A673 (cell line): ENCODE measurements at regions of chr16 and their contacts with region 1.

Region 1: GRCh38 chr16:19886073-19886941 is 1.7 kb upstream of the GPRC5B start:
- DNase-seq: peak; percentile 89
- H3K4me3 ChIP-seq: peak overlapping the region; percentile 48
- H3K27ac ChIP-seq: no peak overlapping the region
- H3K4me1 ChIP-seq: peaks cover 23% of the 10 kb centered on the region
- H3K27me3 ChIP-seq: peaks cover 11% of the 10 kb centered on the region
- CTCF ChIP-seq: peak; percentile 99

Region 2: DNA sequence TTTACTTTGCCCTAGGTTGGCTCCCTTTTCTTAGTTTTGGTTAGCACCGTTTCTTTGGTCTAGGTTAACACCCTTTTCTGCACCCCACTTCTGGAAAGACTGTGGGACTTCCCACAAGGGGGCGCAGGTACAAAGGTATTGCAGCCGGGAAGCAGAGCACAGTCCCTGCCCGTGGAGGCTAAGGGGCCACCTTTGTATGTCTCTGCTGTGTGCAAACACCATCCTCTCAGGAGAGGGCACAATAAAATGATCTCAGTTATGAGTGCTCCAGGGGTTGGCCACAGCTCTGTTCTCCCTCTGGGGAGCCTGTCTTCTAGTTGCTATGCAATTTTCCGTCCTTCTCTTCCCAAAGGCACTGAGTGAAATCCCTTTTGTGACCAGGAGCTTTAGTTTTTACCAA is 497.1 kb before region 1 on chr16:
- CTCF ChIA-PET with region 1: no interaction called
- POLR2A ChIA-PET with region 1: no interaction called
- intact Hi-C with region 1: loop called (anchors 10 kb)
- DNase-seq: peak; percentile 53
- H3K4me3 ChIP-seq: no peak overlapping the region
- H3K27ac ChIP-seq: no peak overlapping the region
- H3K4me1 ChIP-seq: peaks cover 12% of the 10 kb centered on the region
- H3K27me3 ChIP-seq: no peaks in the 10 kb centered on the region
- CTCF ChIP-seq: peak; percentile 67

Region 3: DNA sequence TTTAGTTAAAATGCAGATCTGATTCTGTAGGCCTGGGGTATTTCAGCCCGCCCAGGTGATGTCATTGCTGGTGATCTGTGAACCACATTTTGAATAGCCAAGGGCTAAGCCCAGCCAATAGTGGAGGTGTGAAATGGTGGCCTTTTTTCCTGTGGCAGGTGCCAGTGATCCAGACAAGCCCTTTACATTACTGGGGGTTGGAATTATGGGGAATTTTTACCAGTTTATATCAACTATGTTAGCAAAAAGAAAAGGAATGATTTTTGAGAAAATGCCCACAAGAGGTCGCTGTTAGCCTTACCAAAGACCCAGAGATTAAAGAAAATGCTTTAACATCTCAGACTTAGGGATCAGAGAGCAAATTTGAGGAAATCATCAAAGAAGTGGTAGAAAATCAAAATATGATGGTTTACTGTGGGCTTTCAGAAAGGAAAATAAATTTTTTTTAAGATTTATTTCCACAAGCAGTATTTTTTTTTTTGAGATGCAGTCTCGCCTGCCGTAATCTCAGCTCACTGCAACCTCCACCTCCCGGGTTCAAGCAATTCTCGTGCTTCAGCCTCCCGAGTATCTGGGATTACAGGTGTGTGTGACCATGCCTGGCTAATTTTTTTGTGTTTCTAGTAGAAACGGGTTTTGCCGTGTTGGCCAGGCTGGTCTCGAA is 326.9 kb before region 1 on chr16:
- CTCF ChIA-PET with region 1: no interaction called
- POLR2A ChIA-PET with region 1: no interaction called
- intact Hi-C with region 1: loop called (anchors 1 kb)
- DNase-seq: peak; percentile 69
- H3K4me3 ChIP-seq: no peak overlapping the region
- H3K27ac ChIP-seq: no peak overlapping the region
- H3K4me1 ChIP-seq: no peaks in the 10 kb centered on the region
- H3K27me3 ChIP-seq: no peaks in the 10 kb centered on the region
- CTCF ChIP-seq: peak; percentile 80

Region 4: DNA sequence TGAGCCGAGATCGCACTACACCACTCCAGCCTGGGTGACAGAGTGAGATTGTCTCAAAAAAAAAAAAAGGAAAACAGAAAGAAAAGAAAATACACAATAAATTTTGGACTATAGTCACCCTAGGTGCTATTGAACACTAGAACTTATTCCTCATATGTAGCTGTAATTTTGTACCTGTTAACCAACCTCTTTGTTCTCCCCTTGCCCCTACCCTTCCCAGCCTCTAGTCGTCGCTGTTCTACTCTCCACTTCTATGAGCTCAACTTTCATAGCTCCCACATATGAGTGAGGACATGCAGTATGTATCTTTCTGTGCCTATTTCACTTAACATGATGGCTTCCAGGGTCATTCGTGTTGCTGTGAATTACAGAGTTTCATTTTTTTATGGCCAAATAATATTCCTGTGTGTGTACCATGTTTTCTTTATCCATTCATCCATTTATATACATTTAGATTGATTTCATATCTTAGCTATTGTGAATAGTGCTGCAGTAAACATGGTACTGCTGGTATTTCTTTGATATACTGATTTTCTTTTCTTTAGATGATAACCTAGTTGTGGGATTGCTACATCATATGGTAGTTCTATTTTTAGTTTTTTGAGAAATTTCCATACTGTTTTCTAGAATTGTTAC is 302.5 kb before region 1 on chr16:
- CTCF ChIA-PET with region 1: interaction called, 6 read pairs
- POLR2A ChIA-PET with region 1: interaction called, 4 read pairs
- intact Hi-C with region 1: loop called (anchors 1 kb)
- DNase-seq: peak; percentile 71
- H3K4me3 ChIP-seq: no peak overlapping the region
- H3K27ac ChIP-seq: no peak overlapping the region
- H3K4me1 ChIP-seq: no peaks in the 10 kb centered on the region
- H3K27me3 ChIP-seq: no peaks in the 10 kb centered on the region
- CTCF ChIP-seq: peak; percentile 95

Region 5: DNA sequence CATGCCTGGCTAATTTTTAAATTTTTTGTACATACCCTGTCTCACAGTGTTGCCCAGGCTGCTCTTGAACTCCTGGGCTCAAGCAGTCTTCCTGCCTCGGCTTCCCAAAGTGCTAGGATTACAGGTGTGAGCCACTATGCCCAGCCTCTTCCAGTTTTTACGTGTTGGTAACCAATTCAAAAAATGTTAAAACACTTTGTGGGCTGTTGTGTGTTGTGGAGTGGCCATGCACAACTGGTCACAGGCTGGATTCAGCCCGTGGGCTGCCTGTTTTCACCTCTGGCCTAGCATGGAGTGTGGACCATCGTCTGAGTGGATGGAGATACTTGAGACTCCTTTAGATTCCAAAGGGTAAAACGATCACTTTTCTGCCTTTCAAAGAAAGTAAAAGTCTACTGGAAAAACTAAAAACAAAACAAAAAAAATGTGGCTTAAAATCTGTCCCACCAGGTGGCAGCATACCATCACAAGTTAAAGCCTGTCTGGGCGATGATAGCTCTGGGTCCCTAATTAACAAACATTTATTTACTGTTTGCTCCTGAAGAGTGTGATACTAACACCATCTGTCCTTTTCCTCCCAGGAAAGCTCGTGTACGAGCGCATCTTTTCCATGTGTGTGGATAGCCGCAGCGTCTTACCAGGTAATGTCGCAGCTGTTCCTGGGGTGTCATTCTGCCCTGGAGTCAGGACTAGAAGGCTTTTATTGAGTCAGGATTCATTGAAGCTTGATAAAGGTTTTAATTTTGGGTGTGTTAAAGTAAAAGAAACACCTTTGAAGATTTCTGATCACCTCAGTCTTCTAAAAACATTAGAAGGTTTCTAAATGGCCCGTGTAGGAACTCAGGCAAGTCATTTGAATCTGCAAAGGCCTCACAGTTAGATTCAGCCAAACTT is 285.0 kb before region 1 on chr16:
- CTCF ChIA-PET with region 1: interaction called, 13 read pairs
- POLR2A ChIA-PET with region 1: no interaction called
- intact Hi-C with region 1: loop called (anchors 1 kb)
- DNase-seq: peak; percentile 44
- H3K4me3 ChIP-seq: no peak overlapping the region
- H3K27ac ChIP-seq: no peak overlapping the region
- H3K4me1 ChIP-seq: no peaks in the 10 kb centered on the region
- H3K27me3 ChIP-seq: no peaks in the 10 kb centered on the region
- CTCF ChIP-seq: peak; percentile 72

Region 6: GRCh38 chr16:19717771-19718602 is 168.3 kb before region 1 on chr16 and contains the starts of genes IQCK and KNOP1:
- CTCF ChIA-PET with region 1: no interaction called
- POLR2A ChIA-PET with region 1: no interaction called
- intact Hi-C with region 1: loop called (anchors 2 kb)
- DNase-seq: peak; percentile 94
- H3K4me3 ChIP-seq: peak within 1 kb of the TSS; percentile 81
- H3K27ac ChIP-seq: peak within 1 kb of the TSS; percentile 77
- H3K4me1 ChIP-seq: peaks cover 6% of the 10 kb centered on the region
- H3K27me3 ChIP-seq: no peaks in the 10 kb centered on the region
- CTCF ChIP-seq: no peak
- total RNA-seq, gene IQCK: 11.2 and 14.1 TPM in 2 replicates
- total RNA-seq, gene KNOP1: 65.0 and 68.9 TPM in 2 replicates

Region 7: DNA sequence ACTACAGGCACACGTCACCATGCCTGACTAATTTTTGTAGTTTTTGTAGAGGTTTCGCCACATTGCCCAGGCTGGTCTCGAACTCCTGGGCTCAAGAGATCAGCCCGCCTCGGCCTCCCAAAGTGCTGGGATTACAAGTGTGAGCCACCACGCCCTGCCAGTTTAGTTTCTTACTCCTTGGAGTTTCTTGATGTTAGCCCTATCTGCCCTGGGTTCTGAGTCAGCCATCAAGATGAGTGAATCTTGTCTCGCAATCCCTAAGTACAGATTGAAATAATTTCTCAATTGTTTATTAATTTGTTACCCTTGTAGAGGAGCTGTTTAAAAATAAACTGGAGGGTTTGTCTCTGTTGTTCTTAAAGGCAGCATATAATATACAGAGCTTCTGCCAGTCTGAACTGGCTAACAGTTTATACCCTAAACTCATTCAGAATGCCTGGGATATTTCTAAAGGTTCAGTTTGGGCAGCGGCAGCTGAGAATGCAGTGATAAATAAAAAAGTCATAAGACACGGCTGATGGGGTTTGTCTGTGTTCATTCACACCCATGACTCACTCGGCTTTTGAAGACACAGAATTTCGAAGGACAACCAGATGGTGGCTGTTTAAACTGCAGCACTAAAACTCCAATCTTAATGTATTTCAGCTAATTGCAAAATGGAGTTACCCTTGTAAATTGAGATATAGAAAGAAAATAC is 41.2 kb before region 1 on chr16:
- CTCF ChIA-PET with region 1: no interaction called
- POLR2A ChIA-PET with region 1: no interaction called
- intact Hi-C with region 1: no loop called
- DNase-seq: no peak
- H3K4me3 ChIP-seq: no peak overlapping the region
- H3K27ac ChIP-seq: no peak overlapping the region
- H3K4me1 ChIP-seq: no peaks in the 10 kb centered on the region
- H3K27me3 ChIP-seq: no peaks in the 10 kb centered on the region
- CTCF ChIP-seq: no peak